Posterior vena cava (tissue), 2 donors: ENCODE measurements at regions of chr11 and their contacts with region 1.

Region 1: DNA sequence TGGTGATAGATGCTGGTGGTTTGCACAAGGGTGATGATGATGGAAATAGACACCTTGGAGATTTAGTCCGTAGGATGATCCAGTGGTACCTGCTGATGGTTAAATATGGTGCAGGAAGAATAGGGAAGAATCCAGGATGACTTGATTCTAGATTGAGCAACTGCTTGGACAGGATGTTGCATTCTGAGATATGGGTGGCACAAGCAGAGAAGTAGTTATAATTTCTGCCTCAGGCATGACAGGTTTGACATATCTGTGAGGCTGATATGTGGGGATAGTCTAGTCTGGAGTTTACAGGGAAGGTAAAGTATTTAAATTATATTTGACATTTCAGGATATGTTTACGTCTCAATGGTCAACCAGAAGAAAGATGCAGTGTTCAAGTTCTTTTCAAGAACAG is 12.6 kb upstream of the OR52K1 start:
- DNase-seq: no peak

Region 2: DNA sequence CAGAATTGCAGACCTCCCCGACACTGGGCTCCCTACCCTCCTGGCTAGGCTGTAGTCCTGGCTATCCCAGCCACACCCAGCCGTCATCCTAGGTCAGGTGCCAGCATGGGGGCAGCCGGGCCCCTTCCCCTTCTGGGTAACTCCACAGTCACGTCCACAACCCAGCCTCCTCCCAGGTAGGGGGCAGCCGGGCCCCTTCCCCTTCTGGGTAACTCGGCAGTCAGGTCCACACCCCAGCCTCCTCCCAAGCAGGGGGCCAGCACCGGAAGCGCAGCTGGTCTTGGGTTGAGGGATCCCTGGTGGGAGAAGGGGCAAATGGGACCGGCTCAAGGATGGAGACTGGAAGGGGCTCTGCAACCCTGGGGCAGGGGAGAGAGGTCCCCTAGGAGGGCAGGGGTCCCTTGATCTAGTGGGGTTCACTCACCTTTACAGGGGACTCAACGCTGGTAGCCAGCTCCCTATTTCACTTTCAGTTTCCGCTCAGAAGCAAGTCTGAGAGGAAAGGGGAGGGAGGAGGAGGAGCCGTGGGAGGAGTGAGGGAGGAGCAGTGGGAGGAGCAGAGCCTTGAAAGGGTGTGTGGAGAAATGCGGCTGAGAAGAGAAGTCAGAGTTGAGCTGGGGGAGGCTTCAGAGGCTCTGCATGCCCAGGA is 76.6 kb before region 1 on chr11 and contains the start of gene TRIM21:
- intact Hi-C with region 1: loop called in 1 of 2 experiments (anchors 2 kb)
- DNase-seq: peak; percentile 92
- total RNA-seq, gene TRIM21: 11.7 to 13.8 TPM

Region 3: DNA sequence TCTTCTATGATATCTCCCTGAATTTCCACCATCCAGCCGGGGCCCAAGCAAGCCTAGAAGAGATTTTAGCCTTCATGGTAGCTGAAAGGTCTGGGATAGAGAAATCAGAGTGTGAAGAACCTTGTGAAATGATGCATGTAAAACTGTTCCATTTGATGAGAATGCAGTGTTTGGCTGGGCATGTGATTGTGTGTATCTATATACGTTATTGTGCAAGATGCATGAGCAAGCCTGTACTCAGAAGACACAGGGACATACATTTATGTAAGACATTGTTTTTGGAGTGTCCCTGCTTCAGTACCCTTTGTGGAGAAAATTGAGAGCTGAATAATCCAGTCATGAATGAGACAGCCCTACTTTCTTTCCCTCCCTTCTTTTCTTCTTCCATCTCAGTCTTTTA is 36.0 kb before region 1 on chr11:
- intact Hi-C with region 1: no loop called
- DNase-seq: no peak